Naive thymus-derived CD4-positive, alpha-beta T cell (primary cell): ENCODE measurements at regions of chr9 and their contacts with region 1.

Region 1: GRCh38 chr9:14616188-14616982 is 76.8 kb downstream of the ZDHHC21 start:
- DNase-seq: peak in 6 of 9 donors; percentile 6 to 41 (median 27)
- ATAC-seq: peak; percentile 41
- H3K4me3 ChIP-seq: no peak overlapping the region
- H3K4me3 Mint-ChIP-seq: no peak overlapping the region
- H3K27ac ChIP-seq: no peak overlapping the region
- H3K27ac Mint-ChIP-seq: no peak overlapping the region
- H3K4me1 ChIP-seq: no peaks in the 10 kb centered on the region
- H3K4me1 Mint-ChIP-seq: no peaks in the 10 kb centered on the region
- H3K27me3 ChIP-seq: no peaks in the 10 kb centered on the region
- H3K27me3 Mint-ChIP-seq: no peaks in the 10 kb centered on the region

Region 2: DNA sequence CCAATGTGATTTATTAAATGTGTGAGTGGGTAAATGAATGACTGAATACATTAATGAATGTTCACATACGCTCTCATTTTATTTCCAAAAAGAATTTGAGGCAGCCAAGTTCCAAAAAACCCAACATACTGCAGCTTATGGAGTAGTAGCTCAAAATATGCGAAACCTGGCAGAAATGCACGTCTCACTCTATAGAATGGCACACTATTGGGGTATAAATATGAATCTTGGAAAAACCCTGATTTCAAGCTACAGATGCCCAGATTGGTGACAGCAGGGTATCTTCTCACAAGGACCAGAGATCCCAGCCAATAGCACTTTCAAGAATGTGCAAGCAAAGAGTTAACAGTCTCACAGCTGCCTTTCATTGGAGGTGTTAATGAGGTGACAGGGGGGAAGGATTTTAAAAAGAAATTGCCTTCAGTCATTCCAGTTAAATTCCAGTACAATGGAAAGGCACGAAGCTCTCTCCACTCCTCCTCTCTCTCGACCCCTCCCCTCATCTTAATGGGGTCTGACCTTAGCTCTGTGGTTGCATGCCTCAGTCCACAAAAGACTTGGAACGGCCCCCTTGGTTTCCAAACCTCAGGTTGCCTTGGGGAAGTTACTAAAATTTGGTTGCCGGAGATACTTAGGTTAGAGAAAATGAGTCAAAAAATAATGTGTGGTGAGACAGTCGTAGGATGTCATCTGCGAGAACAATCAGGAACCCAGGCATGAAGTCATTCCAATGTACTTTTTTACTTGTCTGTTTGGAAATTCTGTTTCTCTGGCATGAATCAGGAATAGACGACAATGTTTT is 609.8 kb before region 1 on chr9:
- CTCF ChIA-PET with region 1: no interaction called
- POLR2A ChIA-PET with region 1: no interaction called
- intact Hi-C with region 1: no loop called
- DNase-seq: no peak
- ATAC-seq: no peak
- H3K4me3 ChIP-seq: no peak overlapping the region
- H3K4me3 Mint-ChIP-seq: no peak overlapping the region
- H3K27ac ChIP-seq: no peak overlapping the region
- H3K27ac Mint-ChIP-seq: no peak overlapping the region
- H3K4me1 ChIP-seq: no peaks in the 10 kb centered on the region
- H3K4me1 Mint-ChIP-seq: no peaks in the 10 kb centered on the region
- H3K27me3 ChIP-seq: no peaks in the 10 kb centered on the region
- H3K27me3 Mint-ChIP-seq: no peaks in the 10 kb centered on the region

Region 3: DNA sequence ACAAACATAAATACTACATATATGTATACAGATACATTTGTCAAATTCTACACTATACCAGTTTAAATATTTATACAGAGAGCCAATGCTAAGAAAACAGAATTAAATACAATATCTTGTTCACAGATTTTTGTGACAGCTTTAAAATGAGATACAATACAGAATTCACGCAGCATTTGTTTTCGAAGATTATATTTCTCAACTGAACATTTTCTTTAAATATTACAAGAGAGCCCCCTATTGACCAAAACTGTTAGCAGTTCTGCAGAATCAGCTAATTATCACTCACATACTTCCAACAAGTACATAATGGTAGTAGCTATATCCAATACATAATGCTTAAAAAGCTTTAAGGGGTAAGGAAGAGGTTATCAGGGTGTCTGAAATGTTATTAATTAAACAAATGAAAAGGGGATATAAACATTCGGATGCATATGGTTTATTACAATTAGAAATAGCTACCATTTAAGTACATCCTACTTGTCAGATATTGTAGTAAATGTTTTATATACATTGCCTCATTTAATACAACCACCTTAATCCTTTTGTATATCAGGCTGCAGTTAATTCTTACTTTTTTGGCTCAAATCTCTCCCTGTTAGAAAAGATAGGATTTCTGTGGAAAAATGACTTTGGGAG is 45.2 kb after region 1 on chr9:
- CTCF ChIA-PET with region 1: no interaction called
- POLR2A ChIA-PET with region 1: no interaction called
- intact Hi-C with region 1: loop called in 1 of 2 experiments (anchors 1 kb)
- DNase-seq: peak in 1 of 9 donors; percentile 2
- ATAC-seq: no peak
- H3K4me3 ChIP-seq: no peak overlapping the region
- H3K4me3 Mint-ChIP-seq: no peak overlapping the region
- H3K27ac ChIP-seq: no peak overlapping the region
- H3K27ac Mint-ChIP-seq: no peak overlapping the region
- H3K4me1 ChIP-seq: no peaks in the 10 kb centered on the region
- H3K4me1 Mint-ChIP-seq: no peaks in the 10 kb centered on the region
- H3K27me3 ChIP-seq: no peaks in the 10 kb centered on the region
- H3K27me3 Mint-ChIP-seq: no peaks in the 10 kb centered on the region

Region 4: DNA sequence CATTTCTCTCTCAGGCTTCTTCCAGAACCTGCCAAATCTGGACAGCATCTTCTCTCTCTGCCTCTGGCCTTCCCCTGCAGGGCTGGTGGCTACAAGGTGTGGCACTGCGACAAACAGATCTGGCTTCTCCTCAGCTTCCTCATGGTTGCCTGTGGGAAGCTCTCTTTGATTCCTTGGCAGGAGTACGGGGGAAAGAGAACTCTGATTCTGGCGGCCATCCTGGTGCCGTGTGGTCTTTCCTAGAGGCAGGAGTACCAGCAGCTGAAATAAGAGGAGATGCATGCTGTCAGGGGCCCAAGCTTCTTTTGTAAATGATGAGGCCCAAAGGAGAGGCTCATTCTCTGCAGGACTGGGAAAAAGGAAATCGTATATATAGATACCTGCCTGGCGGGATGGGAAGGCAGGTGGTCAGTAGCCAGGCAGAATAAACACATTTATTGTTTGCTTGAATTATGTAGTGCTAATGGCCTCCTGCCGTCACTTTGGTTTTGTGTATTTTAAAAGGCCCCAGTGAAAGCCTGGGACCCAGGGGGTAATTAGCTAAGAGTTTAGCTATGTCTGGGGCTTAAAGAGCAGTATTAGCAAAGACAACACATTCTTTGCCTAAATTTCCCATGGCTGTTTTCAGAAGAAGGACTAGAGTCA is 106.1 kb after region 1 on chr9 and contains the start of gene CER1:
- CTCF ChIA-PET with region 1: no interaction called
- POLR2A ChIA-PET with region 1: no interaction called
- intact Hi-C with region 1: loop called in 1 of 2 experiments (anchors 5 kb)
- DNase-seq: no peak
- ATAC-seq: no peak
- H3K4me3 ChIP-seq: no peak within 1 kb of the TSS
- H3K4me3 Mint-ChIP-seq: no peak within 1 kb of the TSS
- H3K27ac ChIP-seq: no peak within 1 kb of the TSS
- H3K27ac Mint-ChIP-seq: no peak within 1 kb of the TSS
- H3K4me1 ChIP-seq: no peaks in the 10 kb centered on the region
- H3K4me1 Mint-ChIP-seq: no peaks in the 10 kb centered on the region
- H3K27me3 ChIP-seq: peaks cover 0 to 4% of the 10 kb centered on the region in 2 donors
- H3K27me3 Mint-ChIP-seq: peaks cover 12 to 34% (median 26%) of the 10 kb centered on the region in 5 donors
- total RNA-seq, gene CER1: not detected

Region 5: DNA sequence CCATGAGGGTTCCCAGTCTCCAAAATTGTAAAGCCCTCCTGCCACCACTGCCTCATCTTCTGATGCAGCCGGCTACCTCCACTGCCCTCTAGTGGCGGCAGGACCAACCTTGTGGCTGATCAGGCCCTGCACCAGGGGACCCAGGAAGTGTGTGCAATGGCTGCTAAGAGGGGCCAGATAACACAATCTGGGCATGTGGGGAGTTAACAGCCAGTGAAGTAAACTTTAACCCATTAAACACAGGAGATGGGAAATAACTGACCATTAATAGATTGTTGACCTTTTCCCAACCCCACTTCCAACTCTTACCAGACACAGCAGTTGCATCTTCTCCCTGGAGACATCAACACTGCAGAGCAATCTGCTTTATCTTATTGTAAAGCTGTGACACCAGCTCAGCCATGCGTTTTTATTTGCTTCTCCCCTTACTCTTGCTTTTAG is 230.5 kb after region 1 on chr9:
- CTCF ChIA-PET with region 1: no interaction called
- POLR2A ChIA-PET with region 1: no interaction called
- intact Hi-C with region 1: loop called in 1 of 2 experiments (anchors 5 kb)
- DNase-seq: peak in 7 of 9 donors; percentile 18 to 54 (median 30)
- ATAC-seq: peak; percentile 66
- H3K4me3 ChIP-seq: no peak overlapping the region
- H3K4me3 Mint-ChIP-seq: no peak overlapping the region
- H3K27ac ChIP-seq: no peak overlapping the region
- H3K27ac Mint-ChIP-seq: no peak overlapping the region
- H3K4me1 ChIP-seq: no peaks in the 10 kb centered on the region
- H3K4me1 Mint-ChIP-seq: no peaks in the 10 kb centered on the region
- H3K27me3 ChIP-seq: peaks cover 0 to 4% of the 10 kb centered on the region in 2 donors
- H3K27me3 Mint-ChIP-seq: peaks cover 2 to 21% (median 13%) of the 10 kb centered on the region in 5 donors

Region 6: GRCh38 chr9:15142878-15143534 is 526.6 kb after region 1 on chr9:
- CTCF ChIA-PET with region 1: no interaction called
- POLR2A ChIA-PET with region 1: no interaction called
- intact Hi-C with region 1: loop called in 1 of 2 experiments (anchors 2 kb)
- DNase-seq: peak in 7 of 9 donors; percentile 7 to 45 (median 22)
- ATAC-seq: peak; percentile 83
- H3K4me3 ChIP-seq: no peak overlapping the region
- H3K4me3 Mint-ChIP-seq: no peak overlapping the region
- H3K27ac ChIP-seq: no peak overlapping the region
- H3K27ac Mint-ChIP-seq: no peak overlapping the region
- H3K4me1 ChIP-seq: no peaks in the 10 kb centered on the region
- H3K4me1 Mint-ChIP-seq: peaks cover 0 to 9% (median 3%) of the 10 kb centered on the region in 7 donors
- H3K27me3 ChIP-seq: no peaks in the 10 kb centered on the region
- H3K27me3 Mint-ChIP-seq: peaks cover 0 to 14% (median 5%) of the 10 kb centered on the region in 5 donors